Endothelial cell of umbilical vein (primary cell): ENCODE measurements at regions of chr22 and their contacts with region 1.

Region 1: GRCh38 chr22:37643225-37643847 is 3.9 kb downstream of the SH3BP1 start:
- DNase-seq: peak; percentile 70
- H3K4me3 ChIP-seq: no peak overlapping the region
- H3K27ac ChIP-seq: no peak overlapping the region
- H3K4me1 ChIP-seq: peaks cover 2% of the 10 kb centered on the region
- H3K27me3 ChIP-seq: no peaks in the 10 kb centered on the region
- CTCF ChIP-seq: peak; percentile 84 to 95
- POLR2A ChIP-seq: no peak

Region 2: GRCh38 chr22:37616201-37617083 is 26.9 kb before region 1 on chr22:
- CTCF ChIA-PET with region 1: interaction called, 12 read pairs
- POLR2A ChIA-PET with region 1: no interaction called
- dilution Hi-C with region 1: no loop called
- intact Hi-C with region 1: no loop called
- DNase-seq: no peak
- H3K4me3 ChIP-seq: no peak overlapping the region
- H3K27ac ChIP-seq: no peak overlapping the region
- H3K4me1 ChIP-seq: no peaks in the 10 kb centered on the region
- H3K27me3 ChIP-seq: no peaks in the 10 kb centered on the region
- CTCF ChIP-seq: no peak
- POLR2A ChIP-seq: no peak

Region 3: GRCh38 chr22:37664249-37665101 is 21.1 kb after region 1 on chr22:
- CTCF ChIA-PET with region 1: interaction called, 110 read pairs
- POLR2A ChIA-PET with region 1: no interaction called
- dilution Hi-C with region 1: no loop called
- intact Hi-C with region 1: no loop called
- DNase-seq: no peak
- H3K4me3 ChIP-seq: no peak overlapping the region
- H3K27ac ChIP-seq: no peak overlapping the region
- H3K4me1 ChIP-seq: peaks cover 5% of the 10 kb centered on the region
- H3K27me3 ChIP-seq: no peaks in the 10 kb centered on the region
- CTCF ChIP-seq: no peak
- POLR2A ChIP-seq: no peak

Region 4: GRCh38 chr22:37696657-37697537 is 53.6 kb after region 1 on chr22 and contains the start of gene TRIOBP:
- CTCF ChIA-PET with region 1: interaction called, 19 read pairs
- POLR2A ChIA-PET with region 1: interaction called, 9 read pairs
- dilution Hi-C with region 1: no loop called
- intact Hi-C with region 1: no loop called
- DNase-seq: peak; percentile 96
- H3K4me3 ChIP-seq: no peak within 1 kb of the TSS
- H3K27ac ChIP-seq: no peak within 1 kb of the TSS
- H3K4me1 ChIP-seq: peaks cover 11% of the 10 kb centered on the region
- H3K27me3 ChIP-seq: no peaks in the 10 kb centered on the region
- CTCF ChIP-seq: peak; percentile 56 to 78
- POLR2A ChIP-seq: no peak
- total RNA-seq, gene TRIOBP: 104 TPM in 2 replicates

Region 5: DNA sequence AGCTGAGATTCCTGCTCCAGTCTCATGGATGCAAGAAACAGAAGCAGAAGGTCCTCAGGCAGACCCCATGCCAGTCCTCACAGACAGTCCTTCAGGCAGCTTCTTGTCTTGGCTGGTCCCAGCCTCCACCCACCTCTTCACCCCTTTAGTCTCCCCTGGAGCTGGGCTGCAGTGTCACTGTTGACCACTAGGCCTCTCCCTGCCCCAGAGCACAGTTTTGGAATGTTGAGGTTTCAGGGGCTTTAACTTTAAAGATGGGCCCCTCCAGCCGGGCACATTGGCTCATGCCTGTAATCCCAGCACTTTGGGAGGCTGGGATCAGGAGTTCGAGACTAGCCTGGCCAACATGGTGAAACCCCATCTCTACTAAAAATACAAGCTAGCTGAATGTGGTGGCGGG is 124.9 kb after region 1 on chr22:
- CTCF ChIA-PET with region 1: interaction called, 19 read pairs
- POLR2A ChIA-PET with region 1: no interaction called
- dilution Hi-C with region 1: no loop called
- intact Hi-C with region 1: no loop called
- DNase-seq: no peak
- H3K4me3 ChIP-seq: no peak overlapping the region
- H3K27ac ChIP-seq: no peak overlapping the region
- H3K4me1 ChIP-seq: no peaks in the 10 kb centered on the region
- H3K27me3 ChIP-seq: no peaks in the 10 kb centered on the region
- CTCF ChIP-seq: peak; percentile 24 to 29
- POLR2A ChIP-seq: no peak

Region 6: DNA sequence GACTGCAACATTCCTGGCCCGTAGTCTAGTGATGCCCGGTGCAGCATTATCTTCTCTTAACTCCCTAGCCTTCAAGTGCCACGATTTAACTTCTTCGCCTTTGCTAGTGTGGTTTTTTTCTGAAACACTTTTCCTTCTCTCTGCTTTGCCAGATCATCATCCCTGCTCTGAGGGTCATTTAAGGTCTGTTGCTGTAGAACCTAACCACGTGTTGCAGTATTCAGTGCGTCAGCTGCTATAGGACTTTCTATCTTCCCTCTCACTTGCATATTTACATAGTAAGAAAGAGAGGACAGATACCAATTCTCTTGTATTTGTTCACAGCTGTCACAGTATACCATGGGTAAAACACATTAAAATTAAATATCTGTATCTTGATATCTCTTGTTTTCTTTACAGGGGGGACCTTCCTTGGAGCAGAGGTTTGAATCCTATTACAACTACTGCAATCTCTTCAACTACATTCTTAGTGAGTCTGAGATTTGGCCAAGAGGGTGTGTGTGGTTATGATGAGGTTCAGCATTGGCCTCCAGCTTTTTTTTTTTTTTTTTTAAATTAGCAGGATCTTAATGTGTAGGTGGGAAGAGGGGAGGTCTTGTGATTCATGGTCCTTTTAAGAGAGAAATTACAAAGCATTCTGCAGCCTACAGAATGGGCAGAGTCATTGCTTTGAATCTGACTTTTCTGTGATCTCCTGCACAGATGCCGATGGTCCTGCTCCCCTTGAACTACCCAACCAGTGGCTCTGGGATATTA is 219.4 kb after region 1 on chr22:
- CTCF ChIA-PET with region 1: interaction called, 10 read pairs
- POLR2A ChIA-PET with region 1: no interaction called
- dilution Hi-C with region 1: no loop called
- intact Hi-C with region 1: no loop called
- DNase-seq: no peak
- H3K4me3 ChIP-seq: no peak overlapping the region
- H3K27ac ChIP-seq: no peak overlapping the region
- H3K4me1 ChIP-seq: peaks cover 18% of the 10 kb centered on the region
- H3K27me3 ChIP-seq: no peaks in the 10 kb centered on the region
- CTCF ChIP-seq: no peak
- POLR2A ChIP-seq: no peak